CD14-positive monocyte (primary cell): ENCODE measurements at regions of chr3 and their contacts with region 1.

Region 1: DNA sequence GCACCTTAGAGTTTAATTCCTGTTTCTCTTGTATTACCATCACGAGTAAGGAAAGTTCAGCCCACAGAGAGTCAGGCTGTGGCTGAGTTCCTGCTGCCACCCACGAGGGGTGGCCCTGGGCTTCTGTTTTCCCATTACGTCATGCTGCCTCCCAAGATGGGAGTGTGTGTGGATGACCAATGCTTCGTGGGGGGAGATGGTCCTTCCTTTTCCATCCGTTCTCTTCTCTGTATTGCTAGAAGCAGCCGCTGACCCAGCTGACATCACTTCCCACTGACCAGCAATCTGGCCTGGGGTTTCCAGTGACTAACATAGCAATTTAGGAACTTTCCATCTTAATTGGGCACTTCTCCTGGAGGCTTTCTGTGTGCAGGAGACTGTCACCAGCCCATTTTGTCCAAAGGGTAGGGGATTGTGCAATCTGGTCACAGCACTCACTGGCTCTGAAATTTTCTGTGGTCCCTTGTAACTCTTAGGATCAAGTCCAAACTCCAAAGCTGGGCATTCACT is 9.3 kb downstream of the IRAK2 start:
- DNase-seq: peak; percentile 99 to 100 (median 99)
- H3K4me3 ChIP-seq: no peak overlapping the region
- H3K4me3 Mint-ChIP-seq: peak overlapping the region in 1 of 2 donors; percentile 67
- H3K27ac ChIP-seq: peak overlapping the region; percentile 84
- H3K27ac Mint-ChIP-seq: peak overlapping the region; percentile 93 to 98 (median 95)
- H3K4me1 ChIP-seq: peaks cover 17 to 19% of the 10 kb centered on the region in 2 donors
- H3K4me1 Mint-ChIP-seq: peaks cover 16% of the 10 kb centered on the region
- H3K27me3 ChIP-seq: no peaks in the 10 kb centered on the region
- H3K27me3 Mint-ChIP-seq: peaks cover 0 to 3% (median 2%) of the 10 kb centered on the region in 3 donors
- CTCF ChIP-seq: no peak

Region 2: GRCh38 chr3:10026084-10026890 is 147.7 kb before region 1 on chr3 and contains the start of gene FANCD2:
- intact Hi-C with region 1: no loop called
- DNase-seq: peak; percentile 81 to 92 (median 91)
- H3K4me3 ChIP-seq: peak within 1 kb of the TSS; percentile 81 to 95 (median 92)
- H3K4me3 Mint-ChIP-seq: peak within 1 kb of the TSS; percentile 92 to 95
- H3K27ac ChIP-seq: peak within 1 kb of the TSS; percentile 76 to 96
- H3K27ac Mint-ChIP-seq: peak within 1 kb of the TSS; percentile 95 to 97 (median 97)
- H3K4me1 ChIP-seq: peaks cover 32 to 38% of the 10 kb centered on the region in 2 donors
- H3K4me1 Mint-ChIP-seq: peaks cover 32% of the 10 kb centered on the region
- H3K27me3 ChIP-seq: no peaks in the 10 kb centered on the region
- H3K27me3 Mint-ChIP-seq: no peaks in the 10 kb centered on the region
- CTCF ChIP-seq: no peak
- polyA plus RNA-seq, gene FANCD2: 1.3 to 11.6 (median 2.4) TPM

Region 3: GRCh38 chr3:10192953-10193691 is 19.1 kb after region 1 on chr3:
- intact Hi-C with region 1: loop called in 1 of 2 experiments (anchors 2 kb)
- DNase-seq: peak; percentile 75 to 92 (median 80)
- H3K4me3 ChIP-seq: no peak overlapping the region
- H3K4me3 Mint-ChIP-seq: no peak overlapping the region
- H3K27ac ChIP-seq: peak overlapping the region in 1 of 2 donors; percentile 81
- H3K27ac Mint-ChIP-seq: peak overlapping the region; percentile 81 to 97 (median 93)
- H3K4me1 ChIP-seq: peaks cover 83 to 88% of the 10 kb centered on the region in 2 donors
- H3K4me1 Mint-ChIP-seq: peaks cover 86% of the 10 kb centered on the region
- H3K27me3 ChIP-seq: no peaks in the 10 kb centered on the region
- H3K27me3 Mint-ChIP-seq: peaks cover 0 to 7% (median 0%) of the 10 kb centered on the region in 3 donors
- CTCF ChIP-seq: peak; percentile 51

Region 4: DNA sequence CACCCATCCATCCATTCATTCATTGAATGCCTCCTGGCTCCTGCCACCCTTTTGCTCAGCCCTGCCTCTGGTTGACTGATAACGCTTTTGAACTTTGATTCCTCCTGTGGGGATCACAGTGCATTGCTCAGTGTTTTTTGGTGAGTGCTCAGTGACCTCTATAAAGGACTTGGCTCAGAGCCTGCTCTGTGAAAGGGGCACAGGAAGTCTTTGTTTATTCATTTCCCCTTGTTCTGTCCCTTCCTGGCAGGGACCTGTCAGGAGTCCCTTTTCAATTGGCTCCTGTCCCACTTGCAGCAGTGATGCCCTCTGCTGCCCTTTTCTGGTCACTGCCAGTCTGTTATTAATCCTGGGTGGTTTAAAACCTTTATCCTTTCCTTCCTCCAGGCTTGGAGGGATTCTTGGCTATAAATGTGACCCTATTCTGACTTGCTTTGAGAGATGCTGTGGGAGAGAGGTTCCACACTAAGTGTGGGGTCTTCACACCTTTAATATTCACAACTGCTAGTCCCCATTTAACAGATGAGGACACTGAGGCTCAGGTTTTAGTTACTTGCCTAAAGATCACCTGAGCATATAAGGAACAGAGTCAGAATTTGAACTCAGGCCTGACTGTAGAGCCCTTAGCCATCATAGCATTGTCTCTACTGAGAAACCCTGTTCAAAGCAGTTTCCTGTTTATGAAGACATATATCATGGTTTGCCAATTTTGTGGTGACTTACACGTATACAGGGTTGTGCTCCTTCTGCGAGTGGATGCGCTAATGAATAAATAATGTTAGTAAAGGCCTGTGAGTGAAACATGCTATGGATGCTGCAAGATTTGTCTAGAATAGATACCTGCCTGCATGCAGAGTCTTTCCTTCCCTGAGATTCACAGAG is 51.0 kb after region 1 on chr3:
- intact Hi-C with region 1: loop called in 1 of 2 experiments (anchors 5 kb)
- DNase-seq: peak; percentile 79 to 90 (median 89)
- H3K4me3 ChIP-seq: no peak overlapping the region
- H3K4me3 Mint-ChIP-seq: peak overlapping the region in 1 of 2 donors; percentile 46
- H3K27ac ChIP-seq: peak overlapping the region in 1 of 2 donors; percentile 71
- H3K27ac Mint-ChIP-seq: peak overlapping the region; percentile 84 to 91 (median 85)
- H3K4me1 ChIP-seq: peaks cover 51 to 65% of the 10 kb centered on the region in 2 donors
- H3K4me1 Mint-ChIP-seq: peaks cover 69% of the 10 kb centered on the region
- H3K27me3 ChIP-seq: no peaks in the 10 kb centered on the region
- H3K27me3 Mint-ChIP-seq: peaks cover 0 to 2% (median 0%) of the 10 kb centered on the region in 3 donors
- CTCF ChIP-seq: peak; percentile 85

Region 5: DNA sequence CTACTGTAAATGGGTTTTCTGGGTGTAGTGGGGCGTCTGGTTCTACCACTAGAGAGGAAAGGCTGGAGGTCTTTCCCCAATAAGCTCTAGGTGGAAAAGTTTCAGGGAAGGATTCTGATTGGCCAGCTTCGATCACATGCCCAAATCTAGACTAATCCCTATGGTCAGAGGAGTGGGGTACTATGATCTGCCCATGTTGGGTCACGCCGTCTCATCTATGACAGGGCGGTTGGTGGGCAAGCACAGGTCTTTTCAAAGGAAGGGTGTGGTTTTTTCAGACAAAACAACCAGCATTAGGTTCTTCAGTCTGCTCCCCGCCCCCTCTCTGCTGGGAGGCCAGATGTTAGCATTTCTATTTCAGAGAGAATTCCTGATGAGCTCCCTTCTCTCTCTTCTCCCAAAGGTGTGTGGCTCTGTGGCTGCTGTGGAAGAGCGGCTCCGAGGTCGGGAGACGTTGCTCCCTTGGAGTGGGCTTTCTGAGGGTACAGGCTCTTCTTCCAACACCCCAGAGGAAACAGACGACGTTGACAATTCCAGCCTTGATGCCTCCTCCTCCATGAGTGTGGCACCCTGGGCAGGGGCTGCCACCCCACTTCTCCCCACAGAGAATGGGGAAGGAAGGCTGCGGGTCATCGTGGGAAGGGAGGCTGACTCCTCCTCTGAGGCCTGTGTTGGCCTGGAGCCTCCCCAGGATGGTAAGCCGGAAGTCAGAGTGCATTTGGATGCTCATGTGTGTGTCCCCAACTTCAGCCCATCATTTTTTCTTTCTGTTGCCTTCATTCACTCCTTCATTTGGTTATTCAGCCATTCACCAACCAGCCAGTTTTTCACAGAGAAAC is 64.6 kb after region 1 on chr3:
- intact Hi-C with region 1: no loop called
- DNase-seq: peak in 1 of 3 donors; percentile 33
- H3K4me3 ChIP-seq: no peak overlapping the region
- H3K4me3 Mint-ChIP-seq: no peak overlapping the region
- H3K27ac ChIP-seq: no peak overlapping the region
- H3K27ac Mint-ChIP-seq: peak overlapping the region in 6 of 7 donors; percentile 15 to 83 (median 53)
- H3K4me1 ChIP-seq: peaks cover 4 to 14% of the 10 kb centered on the region in 2 donors
- H3K4me1 Mint-ChIP-seq: peaks cover 23% of the 10 kb centered on the region
- H3K27me3 ChIP-seq: no peaks in the 10 kb centered on the region
- H3K27me3 Mint-ChIP-seq: peaks cover 2 to 4% (median 2%) of the 10 kb centered on the region in 3 donors
- CTCF ChIP-seq: no peak

Region 6: DNA sequence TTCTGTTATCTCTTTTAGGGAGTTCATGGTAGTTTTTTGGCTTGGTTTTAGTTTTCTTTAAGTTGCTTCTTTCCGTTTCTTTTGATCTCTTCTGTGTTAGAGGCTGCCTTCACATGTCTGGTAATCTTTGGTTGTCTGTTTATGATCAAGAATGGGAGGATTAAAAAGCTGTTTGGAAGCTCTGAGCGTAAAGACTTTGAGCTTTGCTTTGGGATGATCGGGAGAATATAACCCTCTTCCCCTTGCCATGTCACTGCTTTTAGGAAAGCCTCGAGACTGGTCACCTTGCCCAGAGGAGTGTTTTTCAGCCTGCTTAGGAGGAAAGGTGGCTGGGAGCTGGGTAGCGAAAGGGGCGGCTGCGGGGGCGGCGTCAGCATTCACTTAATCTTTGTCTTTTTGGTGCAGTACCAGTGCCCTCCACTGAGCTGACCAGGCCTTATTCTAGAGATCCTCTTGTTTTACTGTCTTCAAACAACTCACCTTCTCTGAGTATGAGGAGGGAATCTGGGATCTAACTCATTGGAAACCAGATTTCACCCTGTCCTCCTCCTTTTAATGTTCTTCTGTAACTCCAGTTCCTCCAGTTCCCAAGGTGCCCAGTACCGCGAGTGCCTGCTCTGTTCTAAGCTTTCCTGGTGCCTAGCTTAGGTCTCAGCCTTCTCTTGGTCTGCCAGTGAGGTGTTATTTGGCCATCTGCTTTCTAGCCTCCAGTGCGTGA is 89.8 kb after region 1 on chr3:
- intact Hi-C with region 1: no loop called
- DNase-seq: peak in 1 of 3 donors; percentile 12
- H3K4me3 ChIP-seq: no peak overlapping the region
- H3K4me3 Mint-ChIP-seq: no peak overlapping the region
- H3K27ac ChIP-seq: peak overlapping the region in 1 of 2 donors; percentile 60
- H3K27ac Mint-ChIP-seq: peak overlapping the region in 5 of 7 donors; percentile 2 to 79 (median 26)
- H3K4me1 ChIP-seq: no peaks in the 10 kb centered on the region
- H3K4me1 Mint-ChIP-seq: peaks cover 15% of the 10 kb centered on the region
- H3K27me3 ChIP-seq: no peaks in the 10 kb centered on the region
- H3K27me3 Mint-ChIP-seq: peaks cover 0 to 3% (median 0%) of the 10 kb centered on the region in 3 donors
- CTCF ChIP-seq: peak; percentile 59